H1 (cell line): ENCODE measurements at regions of chr5 and their contacts with region 1.

Region 1: DNA sequence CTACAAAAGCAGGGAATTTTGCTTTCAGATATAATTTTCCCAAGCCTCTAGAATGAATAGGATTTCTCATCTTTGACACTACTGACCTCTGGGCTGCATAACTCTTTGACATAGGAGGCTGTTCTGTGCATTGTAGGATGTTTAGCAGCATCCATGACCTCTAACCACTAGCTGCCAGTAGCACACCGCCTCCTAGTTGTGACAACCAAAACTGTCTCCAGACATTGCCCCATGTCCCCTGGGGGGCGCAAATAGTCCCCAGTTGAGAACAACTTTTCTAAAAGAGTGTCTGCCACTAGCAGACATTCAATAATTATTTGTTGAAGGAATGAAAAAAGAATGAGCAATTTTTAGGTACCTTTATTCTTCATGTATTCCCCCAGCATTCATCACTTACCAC is 51.8 kb downstream of the POU4F3 start:
- DNase-seq: peak in 1 of 2 experiments; percentile 59
- H3K4me3 ChIP-seq: no peak overlapping the region
- H3K27ac ChIP-seq: no peak overlapping the region
- H3K4me1 ChIP-seq: peaks cover 0 to 5% (median under 1%) of the 10 kb centered on the region in 4 experiments; a peak in 1 of 7 replicates
- H3K27me3 ChIP-seq: no peaks in the 10 kb centered on the region; a peak in 1 of 7 replicates
- CTCF ChIP-seq: peak; percentile 89 to 99 (median 92)
- EP300 ChIP-seq: no peak
- POLR2A ChIP-seq: no peak
- RAD21 ChIP-seq: peak; percentile 86 to 87

Region 2: DNA sequence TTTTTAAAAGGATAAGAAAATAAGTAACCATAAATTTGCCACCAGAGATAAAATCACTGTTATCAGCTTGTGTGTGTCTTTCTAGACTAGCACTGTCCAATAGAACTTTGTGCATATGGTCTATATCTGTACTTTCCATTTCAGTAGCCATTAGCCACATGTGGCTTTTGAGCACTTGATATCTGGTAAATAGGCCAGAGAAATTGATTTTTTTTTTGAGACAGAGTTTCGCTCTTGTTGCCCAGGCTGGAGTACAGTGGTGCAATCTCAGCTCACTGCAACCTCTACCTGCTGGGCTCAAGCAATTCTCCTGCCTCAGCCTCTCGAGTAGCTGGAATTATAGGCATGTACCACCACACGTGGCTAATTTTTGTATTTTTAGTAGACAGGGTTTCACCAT is 169.2 kb before region 1 on chr5:
- CTCF ChIA-PET with region 1: no interaction called
- POLR2A ChIA-PET with region 1: no interaction called
- DNase-seq: no peak
- H3K4me3 ChIP-seq: no peak overlapping the region
- H3K27ac ChIP-seq: no peak overlapping the region
- H3K4me1 ChIP-seq: no peaks in the 10 kb centered on the region
- H3K27me3 ChIP-seq: no peaks in the 10 kb centered on the region
- CTCF ChIP-seq: no peak
- EP300 ChIP-seq: no peak
- POLR2A ChIP-seq: no peak
- RAD21 ChIP-seq: no peak

Region 3: DNA sequence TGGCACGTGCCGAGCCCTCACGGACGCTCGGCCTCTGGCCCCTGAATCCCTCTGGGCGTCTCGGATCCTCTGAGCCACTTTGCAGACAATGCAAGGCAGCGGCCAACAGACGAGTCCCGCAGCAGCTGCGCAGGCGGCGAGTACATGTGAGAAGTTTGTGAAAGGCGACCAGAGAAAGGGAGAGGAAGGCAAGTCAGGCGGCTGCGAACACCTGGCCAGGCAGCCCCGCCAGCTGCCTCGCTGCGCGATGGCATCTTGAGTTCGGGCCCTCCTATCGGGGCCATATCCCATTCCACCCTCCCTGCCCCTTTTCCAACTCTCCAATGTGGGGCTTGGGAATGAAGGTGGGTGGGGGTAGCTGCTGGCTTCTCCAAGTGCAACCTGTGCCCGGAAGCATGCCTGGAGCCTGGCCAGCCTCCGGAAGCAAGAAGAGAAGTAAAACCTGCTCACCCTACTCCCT is 56.4 kb before region 1 on chr5:
- CTCF ChIA-PET with region 1: interaction called, 19 read pairs
- POLR2A ChIA-PET with region 1: interaction called, 3 read pairs
- DNase-seq: peak in 1 of 2 experiments; percentile 65
- H3K4me3 ChIP-seq: peak overlapping the region in 3 of 4 experiments; percentile 9 to 48 (median 32); a peak in 4 of 8 replicates
- H3K27ac ChIP-seq: no peak overlapping the region
- H3K4me1 ChIP-seq: peaks cover 10 to 24% (median 16%) of the 10 kb centered on the region in 4 experiments
- H3K27me3 ChIP-seq: peaks cover 70 to 81% (median 75%) of the 10 kb centered on the region in 4 experiments
- CTCF ChIP-seq: no peak
- EP300 ChIP-seq: no peak
- POLR2A ChIP-seq: no peak
- RAD21 ChIP-seq: no peak

Region 4: GRCh38 chr5:146369691-146370090 is 20.8 kb before region 1 on chr5:
- CTCF ChIA-PET with region 1: interaction called, 55 read pairs
- POLR2A ChIA-PET with region 1: no interaction called
- DNase-seq: no peak
- H3K4me3 ChIP-seq: no peak overlapping the region
- H3K27ac ChIP-seq: no peak overlapping the region
- H3K4me1 ChIP-seq: peaks cover 0 to 2% (median 0%) of the 10 kb centered on the region in 4 experiments; a peak in 2 of 7 replicates
- H3K27me3 ChIP-seq: peaks cover 0 to 3% (median 0%) of the 10 kb centered on the region in 4 experiments; a peak in 2 of 7 replicates
- CTCF ChIP-seq: no peak
- EP300 ChIP-seq: no peak
- POLR2A ChIP-seq: no peak
- RAD21 ChIP-seq: no peak

Region 5: GRCh38 chr5:146378986-146379385 is 11.5 kb before region 1 on chr5:
- CTCF ChIA-PET with region 1: interaction called, 55 read pairs
- POLR2A ChIA-PET with region 1: interaction called, 3 read pairs
- DNase-seq: peak in 1 of 2 experiments; percentile 54
- H3K4me3 ChIP-seq: no peak overlapping the region
- H3K27ac ChIP-seq: no peak overlapping the region
- H3K4me1 ChIP-seq: no peaks in the 10 kb centered on the region
- H3K27me3 ChIP-seq: no peaks in the 10 kb centered on the region; a peak in 2 of 7 replicates
- CTCF ChIP-seq: no peak
- EP300 ChIP-seq: no peak
- POLR2A ChIP-seq: no peak
- RAD21 ChIP-seq: no peak

Region 6: DNA sequence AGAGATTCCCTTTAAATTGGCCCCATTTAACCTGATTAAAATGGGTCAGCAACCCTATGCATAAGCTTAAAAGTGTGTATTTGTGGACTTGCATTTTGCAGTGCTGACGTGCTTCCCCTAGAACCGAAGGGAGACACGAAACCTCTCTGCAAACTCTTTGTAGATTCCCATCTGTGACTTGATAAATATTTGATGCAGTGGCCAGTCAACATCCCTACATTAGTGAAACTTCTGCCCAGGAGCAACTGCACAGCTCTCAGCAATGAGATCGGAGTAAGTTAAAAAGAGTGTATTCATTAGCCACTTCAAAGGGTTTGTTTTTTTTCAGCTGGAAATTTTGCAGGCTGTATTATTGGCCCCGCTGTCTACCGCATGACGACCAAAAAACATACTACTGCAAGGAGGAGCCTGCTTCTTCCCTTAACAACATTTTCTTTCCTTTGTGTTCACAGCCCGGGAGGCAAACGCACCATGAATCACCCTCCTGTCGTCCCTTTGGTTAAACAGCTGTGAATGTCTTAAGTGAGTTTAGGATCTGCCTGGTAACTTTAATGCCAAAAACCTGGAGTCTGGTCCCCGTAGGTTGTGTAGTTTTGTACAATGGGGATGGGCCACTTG is 18.7 kb after region 1 on chr5:
- CTCF ChIA-PET with region 1: interaction called, 81 read pairs
- POLR2A ChIA-PET with region 1: no interaction called
- DNase-seq: no peak
- H3K4me3 ChIP-seq: no peak overlapping the region
- H3K27ac ChIP-seq: no peak overlapping the region
- H3K4me1 ChIP-seq: no peaks in the 10 kb centered on the region; a peak in 2 of 7 replicates
- H3K27me3 ChIP-seq: no peaks in the 10 kb centered on the region
- CTCF ChIP-seq: no peak
- EP300 ChIP-seq: no peak
- POLR2A ChIP-seq: no peak
- RAD21 ChIP-seq: no peak

Region 7: GRCh38 chr5:146490089-146490843 is 99.8 kb after region 1 on chr5:
- CTCF ChIA-PET with region 1: no interaction called
- POLR2A ChIA-PET with region 1: no interaction called
- DNase-seq: no peak
- H3K4me3 ChIP-seq: no peak overlapping the region
- H3K27ac ChIP-seq: no peak overlapping the region
- H3K4me1 ChIP-seq: no peaks in the 10 kb centered on the region
- H3K27me3 ChIP-seq: no peaks in the 10 kb centered on the region
- CTCF ChIP-seq: no peak
- EP300 ChIP-seq: no peak
- POLR2A ChIP-seq: peak; percentile 29 to 41; a peak in 1 of 3 replicates
- RAD21 ChIP-seq: no peak

Region 8: GRCh38 chr5:146667633-146668272 is 277.3 kb after region 1 on chr5:
- CTCF ChIA-PET with region 1: no interaction called
- POLR2A ChIA-PET with region 1: no interaction called
- DNase-seq: no peak
- H3K4me3 ChIP-seq: no peak overlapping the region
- H3K27ac ChIP-seq: no peak overlapping the region
- H3K4me1 ChIP-seq: peaks cover 3 to 14% (median 8%) of the 10 kb centered on the region in 4 experiments; a peak in 4 of 7 replicates
- H3K27me3 ChIP-seq: no peaks in the 10 kb centered on the region
- CTCF ChIP-seq: no peak
- EP300 ChIP-seq: no peak
- POLR2A ChIP-seq: no peak
- RAD21 ChIP-seq: no peak